Dorsolateral prefrontal cortex (tissue), 120 donors: ENCODE measurements at regions of chr14 and their contacts with region 1.

Region 1: GRCh38 chr14:90399541-90400444 is 3.0 kb downstream of the CALM1 start:
- DNase-seq: peak; percentile 80 to 96 (median 92)
- H3K4me3 ChIP-seq: peak overlapping the region; percentile 76 to 100 (median 97)
- H3K27ac ChIP-seq: peak overlapping the region in 58 of 59 donors; percentile 21 to 99 (median 97)
- H3K27me3 ChIP-seq: no peaks in the 10 kb centered on the region
- CTCF ChIP-seq: peak; percentile 95 to 100 (median 100)

Region 2: GRCh38 chr14:90301668-90302090 is 98.1 kb before region 1 on chr14:
- intact Hi-C with region 1: loop called (anchors 5 kb)
- DNase-seq: no peak
- H3K4me3 ChIP-seq: peak overlapping the region in 13 of 59 donors; percentile 0 to 33 (median 11)
- H3K27ac ChIP-seq: peak overlapping the region; percentile 38 to 99 (median 92)
- H3K27me3 ChIP-seq: no peaks in the 10 kb centered on the region
- CTCF ChIP-seq: peak in 54 of 56 donors; percentile 55 to 88 (median 77)

Region 3: DNA sequence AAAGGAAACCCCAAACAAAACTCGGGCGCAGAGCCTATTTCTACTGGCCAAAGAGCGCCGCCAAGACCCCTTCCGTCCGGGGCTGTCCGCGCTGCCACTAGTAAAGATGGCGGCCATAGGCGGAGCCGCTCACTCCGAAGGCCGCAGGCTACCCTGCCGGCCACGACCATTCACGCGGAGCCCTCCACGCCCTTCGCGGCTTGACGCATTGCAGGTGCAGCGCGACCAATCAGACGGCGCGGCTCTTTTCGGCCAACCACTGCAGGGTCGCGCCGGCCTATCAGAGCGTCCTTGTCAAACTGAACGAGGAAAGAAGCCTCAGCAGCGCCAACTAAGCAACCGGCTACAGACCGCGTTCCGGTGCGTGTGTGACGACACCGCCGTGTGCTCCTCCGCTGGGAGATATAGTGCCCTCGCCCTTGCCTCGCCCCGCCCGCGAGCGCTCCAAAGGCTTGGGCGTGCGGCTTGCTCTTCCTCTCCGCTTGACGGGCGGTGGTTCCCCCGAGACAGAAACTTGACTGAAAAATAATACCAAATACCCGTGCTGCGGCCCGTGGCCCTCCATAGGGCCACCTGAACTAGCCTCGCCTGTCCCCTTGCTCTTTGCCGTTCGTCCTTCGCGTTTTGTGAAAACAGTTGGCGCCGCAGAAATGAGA is 16.6 kb before region 1 on chr14:
- intact Hi-C with region 1: loop called (anchors 1 kb)
- DNase-seq: peak; percentile 99 to 100 (median 100)
- H3K4me3 ChIP-seq: peak overlapping the region; percentile 48 to 85 (median 71)
- H3K27ac ChIP-seq: peak overlapping the region; percentile 98 to 100 (median 100)
- H3K27me3 ChIP-seq: no peaks in the 10 kb centered on the region
- CTCF ChIP-seq: peak in 53 of 56 donors; percentile 2 to 64 (median 37)

Region 4: GRCh38 chr14:90513161-90514014 is 113.6 kb after region 1 on chr14:
- intact Hi-C with region 1: loop called (anchors 2 kb)
- DNase-seq: peak; percentile 59 to 98 (median 97)
- H3K4me3 ChIP-seq: peak overlapping the region in 7 of 59 donors; percentile 17 to 47 (median 27)
- H3K27ac ChIP-seq: peak overlapping the region; percentile 88 to 100 (median 99)
- H3K27me3 ChIP-seq: no peaks in the 10 kb centered on the region
- CTCF ChIP-seq: peak in 44 of 56 donors; percentile 10 to 59 (median 34)

Region 5: GRCh38 chr14:90599748-90600507 is 200.1 kb after region 1 on chr14:
- intact Hi-C with region 1: loop called (anchors 5 to 10 kb)
- DNase-seq: peak in 5 of 10 donors; percentile 46 to 74 (median 58)
- H3K4me3 ChIP-seq: peak overlapping the region in 19 of 59 donors; percentile 0 to 48 (median 18)
- H3K27ac ChIP-seq: peak overlapping the region; percentile 20 to 95 (median 84)
- H3K27me3 ChIP-seq: no peaks in the 10 kb centered on the region
- CTCF ChIP-seq: peak in 53 of 56 donors; percentile 6 to 69 (median 46)

Region 6: GRCh38 chr14:90697577-90698206 is 297.9 kb after region 1 on chr14:
- intact Hi-C with region 1: loop called (anchors 1 kb)
- DNase-seq: peak; percentile 75 to 93 (median 90)
- H3K4me3 ChIP-seq: peak overlapping the region in 36 of 59 donors; percentile 2 to 45 (median 24)
- H3K27ac ChIP-seq: peak overlapping the region; percentile 72 to 97 (median 91)
- H3K27me3 ChIP-seq: no peaks in the 10 kb centered on the region
- CTCF ChIP-seq: peak; percentile 89 to 99 (median 97)

Region 7: DNA sequence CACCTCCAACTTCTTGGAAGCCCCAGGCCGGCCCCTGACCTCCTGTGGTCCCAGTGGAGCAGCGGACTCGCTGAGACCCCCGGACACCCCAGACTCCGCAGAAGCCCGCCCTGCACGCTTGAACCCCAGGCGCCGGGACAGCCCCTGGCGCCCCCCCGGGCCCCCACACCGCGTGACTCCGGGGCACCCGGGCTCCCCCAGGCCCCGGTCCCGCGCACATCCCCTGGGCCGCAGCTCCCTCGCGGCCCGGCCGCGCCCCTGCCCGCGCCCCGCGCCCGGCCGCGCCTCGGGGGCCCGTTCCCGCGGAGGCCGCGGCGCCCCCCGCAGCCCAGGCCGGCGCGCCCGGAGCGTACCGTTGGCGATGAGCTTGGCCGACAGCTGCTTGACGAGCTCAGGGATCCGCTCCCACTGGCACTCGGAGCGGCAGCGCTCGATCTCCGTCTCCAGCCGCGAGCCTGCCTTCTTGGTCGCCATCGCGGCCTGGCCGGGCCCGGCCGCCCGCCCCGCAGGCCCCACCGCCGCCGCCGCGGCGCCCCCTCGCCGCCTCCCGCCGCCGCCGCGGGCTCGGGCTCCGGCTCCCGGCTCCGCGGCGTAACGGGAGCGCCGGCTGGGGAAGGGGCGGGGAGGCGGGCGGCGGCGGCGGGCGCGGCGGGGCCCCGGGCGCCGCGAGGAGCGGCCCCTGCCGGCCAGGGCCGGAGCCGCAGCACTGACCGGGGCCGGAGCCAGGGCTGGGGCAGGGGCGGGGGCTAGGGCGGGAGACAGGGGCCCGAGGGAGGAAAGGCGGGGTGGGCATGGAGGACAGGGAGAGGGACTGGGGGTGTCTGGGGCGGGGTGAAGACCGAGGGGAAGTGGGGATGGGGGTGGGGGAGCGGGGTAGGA is 416.3 kb after region 1 on chr14 and contains the start of gene TTC7B:
- intact Hi-C with region 1: loop called in 1 of 2 experiments (anchors 5 kb)
- DNase-seq: peak in 2 of 10 donors; percentile 36 to 49
- H3K4me3 ChIP-seq: peak within 1 kb of the TSS; percentile 29 to 90 (median 78)
- H3K27ac ChIP-seq: peak within 1 kb of the TSS in 27 of 59 donors; percentile 9 to 84 (median 40)
- H3K27me3 ChIP-seq: no peaks in the 10 kb centered on the region
- CTCF ChIP-seq: peak in 16 of 56 donors; percentile 5 to 47 (median 14)
- total RNA-seq, gene TTC7B: 90.4 to 281 (median 204) TPM